Activated naive CD4-positive, alpha-beta T cell treated with anti-CD3 and anti-CD28 coated beads, Interleukin-2, amount 10 ng/mL, durations not matched to agents 7 days and 5 days (primary cell): ENCODE measurements at regions of chr2 and their contacts with region 1.

Region 1: DNA sequence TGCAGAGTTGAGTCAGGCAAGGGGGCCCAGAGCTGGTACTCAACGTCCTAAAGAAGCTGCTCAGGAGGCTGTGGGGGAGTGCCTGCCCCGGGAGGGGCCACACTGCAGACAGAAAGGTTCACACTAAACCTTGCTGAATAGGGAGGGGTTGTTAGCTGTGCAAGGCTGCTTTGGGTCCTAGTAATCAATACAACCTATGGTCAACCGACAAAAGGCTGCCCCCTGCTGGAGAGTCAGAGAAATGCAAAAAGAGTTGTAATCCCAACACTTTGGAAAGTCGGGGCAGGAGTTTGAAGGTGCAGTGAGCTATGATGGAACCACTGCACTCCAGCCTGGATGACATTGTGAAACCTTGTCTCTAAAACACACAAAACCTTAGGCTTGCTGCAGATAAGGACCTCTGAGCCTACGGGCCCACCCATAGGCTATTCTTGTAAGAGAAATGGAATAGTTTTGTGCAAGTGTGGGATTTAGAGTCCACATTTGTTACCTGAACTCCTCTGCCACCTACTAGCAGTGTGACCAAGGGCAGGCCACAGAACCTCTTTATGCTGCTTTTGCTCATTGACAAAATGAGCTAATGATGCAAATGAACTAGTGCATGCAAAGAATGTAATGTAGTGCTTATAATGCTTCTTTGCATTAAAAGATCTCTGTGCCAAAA is 81.5 kb downstream of the PRPF40A start:
- DNase-seq: peak; percentile 77
- H3K4me3 Mint-ChIP-seq: no peak overlapping the region
- H3K27ac Mint-ChIP-seq: no peak overlapping the region
- H3K4me1 Mint-ChIP-seq: no peaks in the 10 kb centered on the region
- H3K27me3 Mint-ChIP-seq: peaks cover 18% of the 10 kb centered on the region

Region 2: GRCh38 chr2:152025678-152026287 is 610.0 kb before region 1 on chr2:
- CTCF ChIA-PET with region 1: interaction called, 10 read pairs
- DNase-seq: peak; percentile 85
- H3K4me3 Mint-ChIP-seq: peak overlapping the region; percentile 74
- H3K27ac Mint-ChIP-seq: no peak overlapping the region
- H3K4me1 Mint-ChIP-seq: peaks cover 9% of the 10 kb centered on the region
- H3K27me3 Mint-ChIP-seq: peaks cover 6% of the 10 kb centered on the region

Region 3: GRCh38 chr2:152175458-152176325 is 460.1 kb before region 1 on chr2 and contains the start of gene STAM2:
- CTCF ChIA-PET with region 1: interaction called, 31 read pairs
- DNase-seq: peak; percentile 93
- H3K4me3 Mint-ChIP-seq: peak within 1 kb of the TSS; percentile 97
- H3K27ac Mint-ChIP-seq: peak within 1 kb of the TSS; percentile 97
- H3K4me1 Mint-ChIP-seq: peaks cover 37% of the 10 kb centered on the region
- H3K27me3 Mint-ChIP-seq: peaks cover 6% of the 10 kb centered on the region

Region 4: DNA sequence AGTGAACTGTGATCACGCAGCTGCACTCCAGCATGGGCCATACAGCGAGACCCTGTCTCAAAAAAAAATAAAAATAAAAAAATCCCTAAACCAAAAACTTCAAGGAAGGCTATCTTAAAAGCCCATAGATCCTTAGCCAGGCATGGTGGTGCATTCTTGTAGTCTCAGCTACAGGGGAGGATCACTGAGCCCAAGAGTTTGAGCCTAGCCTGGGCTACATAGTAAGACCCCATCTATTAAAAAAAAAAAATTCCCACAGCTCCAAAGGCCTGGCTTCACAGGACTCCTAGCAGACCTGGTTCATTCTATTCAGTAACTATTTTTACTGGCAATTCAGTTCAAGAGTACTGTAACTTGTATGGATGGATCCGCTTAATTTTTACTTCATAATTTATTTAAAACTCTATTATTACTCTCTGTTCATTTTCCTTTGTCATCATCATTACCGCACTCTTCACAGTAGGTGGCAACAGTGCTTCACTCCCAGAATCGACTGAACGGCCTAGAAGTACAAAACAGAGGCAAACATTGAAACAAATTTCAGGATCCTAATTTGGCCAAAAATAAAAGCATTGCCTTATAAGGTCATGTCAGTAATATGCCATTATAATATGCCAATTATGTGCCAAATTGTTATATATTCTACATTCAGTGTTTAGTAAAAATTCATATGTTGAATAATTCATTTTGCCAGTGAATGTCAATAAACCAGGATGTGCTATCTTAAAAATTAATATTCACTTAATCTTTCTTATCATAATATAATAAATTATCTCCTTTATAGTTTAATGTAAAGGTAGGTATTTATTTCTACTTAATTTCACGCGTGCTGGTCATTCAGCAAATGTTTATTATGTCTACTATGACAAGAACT is 445.9 kb before region 1 on chr2:
- CTCF ChIA-PET with region 1: interaction called, 12 read pairs
- DNase-seq: peak; percentile 41
- H3K4me3 Mint-ChIP-seq: no peak overlapping the region
- H3K27ac Mint-ChIP-seq: no peak overlapping the region
- H3K4me1 Mint-ChIP-seq: peaks cover 5% of the 10 kb centered on the region
- H3K27me3 Mint-ChIP-seq: peaks cover 10% of the 10 kb centered on the region

Region 5: DNA sequence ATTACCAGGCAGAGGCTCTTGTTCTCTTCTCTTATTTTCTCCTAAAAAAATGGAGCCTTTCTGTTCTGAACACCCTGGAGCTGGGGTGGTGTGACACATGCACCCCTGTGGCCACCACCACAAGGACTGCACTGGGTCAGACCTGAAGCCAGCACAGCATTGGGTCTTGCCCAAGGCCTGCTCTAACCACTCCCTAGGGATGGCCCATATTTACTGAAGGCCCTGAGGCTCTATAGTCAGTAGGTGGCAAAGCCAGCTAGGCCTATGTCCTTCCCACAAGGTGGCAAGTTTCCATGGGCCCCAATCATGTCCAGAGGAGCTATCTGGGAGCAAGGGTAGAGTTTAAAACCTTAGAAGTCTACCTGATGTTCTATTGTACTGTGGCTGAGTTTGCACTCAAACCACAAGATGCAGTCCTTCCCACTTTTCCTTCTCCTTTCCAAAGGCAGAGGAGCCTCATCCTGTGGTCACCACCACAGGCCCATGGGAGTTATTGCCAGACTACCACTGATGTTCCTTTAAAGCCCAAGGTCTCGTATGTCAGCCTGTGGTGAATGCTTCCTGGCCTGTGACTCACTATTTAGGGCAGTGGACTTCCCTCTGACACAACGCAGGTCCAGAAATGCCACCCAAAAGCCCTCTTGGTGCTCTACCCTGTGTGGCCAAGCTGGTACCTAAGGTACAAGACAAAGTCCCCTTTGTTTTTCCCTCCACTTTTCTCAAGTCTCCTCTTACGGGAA is 315.8 kb before region 1 on chr2:
- CTCF ChIA-PET with region 1: no interaction called
- DNase-seq: no peak
- H3K4me3 Mint-ChIP-seq: no peak overlapping the region
- H3K27ac Mint-ChIP-seq: no peak overlapping the region
- H3K4me1 Mint-ChIP-seq: no peaks in the 10 kb centered on the region
- H3K27me3 Mint-ChIP-seq: no peaks in the 10 kb centered on the region

Region 6: GRCh38 chr2:152648336-152648735 is 12.6 kb after region 1 on chr2:
- CTCF ChIA-PET with region 1: interaction called, 24 read pairs
- DNase-seq: no peak
- H3K4me3 Mint-ChIP-seq: no peak overlapping the region
- H3K27ac Mint-ChIP-seq: no peak overlapping the region
- H3K4me1 Mint-ChIP-seq: no peaks in the 10 kb centered on the region
- H3K27me3 Mint-ChIP-seq: no peaks in the 10 kb centered on the region